Transverse colon (tissue), 4 donors: ENCODE measurements at regions of chr12 and their contacts with region 1.

Region 1: DNA sequence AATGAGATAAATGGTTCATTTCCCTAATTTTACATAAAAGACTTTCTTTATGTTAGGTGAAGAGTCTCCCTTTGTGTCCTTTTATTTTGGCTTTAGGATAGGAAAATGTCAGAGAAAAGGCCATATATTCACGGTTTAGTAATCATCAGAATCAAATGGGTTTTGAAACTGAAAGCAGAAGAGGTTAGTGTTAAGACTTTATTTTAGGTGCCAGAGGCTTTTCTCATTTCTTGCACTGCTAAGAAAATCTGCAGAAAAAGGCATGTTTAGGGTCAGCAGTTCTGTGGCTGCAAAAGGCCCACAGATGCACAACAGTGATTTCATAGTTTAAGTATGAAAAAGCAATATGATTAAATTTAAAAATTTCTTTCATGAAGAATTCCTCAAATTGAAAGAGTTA is 80.4 kb upstream of the SINHCAF start:
- DNase-seq: no peak
- H3K4me3 ChIP-seq: no peak overlapping the region
- H3K27ac ChIP-seq: no peak overlapping the region
- H3K4me1 ChIP-seq: peaks cover 0 to 6% (median 0%) of the 10 kb centered on the region in 4 donors
- H3K27me3 ChIP-seq: no peaks in the 10 kb centered on the region
- CTCF ChIP-seq: no peak
- EP300 ChIP-seq: no peak
- POLR2A ChIP-seq: no peak

Region 2: DNA sequence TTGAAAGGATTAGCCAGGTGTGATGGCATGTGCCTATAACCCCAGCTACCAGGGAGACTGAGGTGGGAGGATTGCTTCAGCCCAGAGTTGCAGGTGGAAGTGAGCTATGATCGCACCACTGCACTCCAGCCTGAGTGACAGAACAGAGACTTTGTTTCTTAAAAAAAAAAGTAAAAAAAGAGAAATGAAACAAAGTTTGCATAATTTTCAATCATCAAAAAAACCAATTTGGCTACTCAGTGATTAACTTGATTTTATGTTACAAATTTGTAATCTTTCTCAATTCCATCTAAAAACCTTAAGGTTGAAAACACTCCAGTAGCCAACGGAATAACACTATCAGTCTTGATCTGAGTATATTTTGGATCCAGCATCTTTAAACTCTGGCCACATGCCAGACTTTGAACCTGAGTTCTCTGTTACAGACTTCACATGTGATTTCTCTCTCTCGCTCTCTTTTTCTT is 197.2 kb after region 1 on chr12:
- in situ Hi-C with region 1: no loop called
- intact Hi-C with region 1: loop called (anchors 1 kb)
- DNase-seq: peak; percentile 39
- H3K4me3 ChIP-seq: no peak overlapping the region
- H3K27ac ChIP-seq: no peak overlapping the region
- H3K4me1 ChIP-seq: no peaks in the 10 kb centered on the region
- H3K27me3 ChIP-seq: no peaks in the 10 kb centered on the region
- CTCF ChIP-seq: no peak
- EP300 ChIP-seq: no peak
- POLR2A ChIP-seq: no peak

Region 3: GRCh38 chr12:31629756-31630732 is 223.7 kb after region 1 on chr12:
- in situ Hi-C with region 1: loop called in 3 of 4 experiments (anchors 5 to 10 kb)
- intact Hi-C with region 1: no loop called
- DNase-seq: no peak
- H3K4me3 ChIP-seq: no peak overlapping the region
- H3K27ac ChIP-seq: no peak overlapping the region
- H3K4me1 ChIP-seq: peaks cover 0 to 7% (median 0%) of the 10 kb centered on the region in 4 donors
- H3K27me3 ChIP-seq: no peaks in the 10 kb centered on the region
- CTCF ChIP-seq: no peak
- EP300 ChIP-seq: no peak
- POLR2A ChIP-seq: no peak

Region 4: DNA sequence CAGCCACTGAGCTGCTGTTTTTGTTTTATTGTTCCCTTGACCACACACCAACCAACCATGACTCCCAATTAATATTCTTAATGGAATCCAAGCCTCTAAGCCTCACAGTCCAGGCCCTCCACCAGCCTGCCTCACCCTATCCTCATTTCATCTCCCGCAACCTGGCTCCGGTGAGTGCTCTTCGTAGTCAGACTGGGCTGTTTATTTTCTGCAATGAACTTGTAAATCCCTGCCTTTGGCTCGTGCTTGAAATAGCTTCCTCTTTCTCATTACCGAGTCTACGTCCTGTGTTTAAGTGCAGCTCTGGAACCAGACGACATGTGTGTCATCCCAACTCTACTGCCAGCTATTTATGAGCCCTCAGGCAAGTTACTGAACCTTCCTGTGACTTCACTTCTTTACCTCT is 240.7 kb after region 1 on chr12:
- in situ Hi-C with region 1: loop called in 1 of 4 experiments (anchors 5 kb)
- intact Hi-C with region 1: no loop called
- DNase-seq: no peak
- H3K4me3 ChIP-seq: no peak overlapping the region
- H3K27ac ChIP-seq: no peak overlapping the region
- H3K4me1 ChIP-seq: peaks cover 0 to 20% (median 8%) of the 10 kb centered on the region in 4 donors
- H3K27me3 ChIP-seq: no peaks in the 10 kb centered on the region
- CTCF ChIP-seq: no peak
- EP300 ChIP-seq: no peak
- POLR2A ChIP-seq: no peak

Region 5: GRCh38 chr12:31662176-31662849 is 256.0 kb after region 1 on chr12:
- in situ Hi-C with region 1: no loop called
- intact Hi-C with region 1: no loop called
- DNase-seq: no peak
- H3K4me3 ChIP-seq: no peak overlapping the region
- H3K27ac ChIP-seq: no peak overlapping the region
- H3K4me1 ChIP-seq: peaks cover 3 to 11% (median 10%) of the 10 kb centered on the region in 4 donors
- H3K27me3 ChIP-seq: no peaks in the 10 kb centered on the region
- CTCF ChIP-seq: no peak
- EP300 ChIP-seq: no peak
- POLR2A ChIP-seq: no peak